Naive thymus-derived CD8-positive, alpha-beta T cell (primary cell): ENCODE measurements at regions of chr16 and their contacts with region 1.

Region 1: DNA sequence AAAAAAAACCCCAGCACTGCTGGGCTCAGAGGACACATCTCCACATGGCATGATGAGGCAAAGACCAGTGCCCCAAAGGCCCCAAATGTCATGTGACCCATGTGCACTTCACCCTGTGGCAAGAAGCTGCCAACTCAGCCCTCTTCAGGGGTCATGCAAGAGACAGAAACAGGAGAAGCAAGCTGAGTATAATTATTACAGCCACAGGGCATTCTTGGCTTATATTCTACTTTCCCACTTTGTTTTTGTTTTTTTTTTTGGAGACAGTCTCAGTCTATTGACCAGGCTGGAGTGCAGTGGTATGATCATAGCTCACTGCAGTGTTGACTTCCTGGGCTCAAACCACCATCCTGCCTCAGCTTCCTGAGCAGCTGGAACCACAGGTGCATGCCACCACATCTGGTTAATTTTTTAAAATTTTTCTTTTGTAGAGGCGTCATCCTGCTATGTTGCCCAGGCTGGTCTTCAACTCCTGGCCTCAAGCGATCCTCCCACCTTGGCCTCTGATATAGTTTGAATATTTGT is 32.7 kb upstream of the LITAF start:
- DNase-seq: peak in 6 of 10 donors; percentile 11 to 57 (median 42)
- ATAC-seq: peak; percentile 35 to 41
- H3K4me3 Mint-ChIP-seq: peak overlapping the region; percentile 44 to 91 (median 71)
- H3K27ac Mint-ChIP-seq: peak overlapping the region; percentile 90 to 100 (median 98)
- H3K4me1 Mint-ChIP-seq: peaks cover 26 to 86% (median 76%) of the 10 kb centered on the region in 4 donors
- H3K27me3 Mint-ChIP-seq: no peaks in the 10 kb centered on the region

Region 2: DNA sequence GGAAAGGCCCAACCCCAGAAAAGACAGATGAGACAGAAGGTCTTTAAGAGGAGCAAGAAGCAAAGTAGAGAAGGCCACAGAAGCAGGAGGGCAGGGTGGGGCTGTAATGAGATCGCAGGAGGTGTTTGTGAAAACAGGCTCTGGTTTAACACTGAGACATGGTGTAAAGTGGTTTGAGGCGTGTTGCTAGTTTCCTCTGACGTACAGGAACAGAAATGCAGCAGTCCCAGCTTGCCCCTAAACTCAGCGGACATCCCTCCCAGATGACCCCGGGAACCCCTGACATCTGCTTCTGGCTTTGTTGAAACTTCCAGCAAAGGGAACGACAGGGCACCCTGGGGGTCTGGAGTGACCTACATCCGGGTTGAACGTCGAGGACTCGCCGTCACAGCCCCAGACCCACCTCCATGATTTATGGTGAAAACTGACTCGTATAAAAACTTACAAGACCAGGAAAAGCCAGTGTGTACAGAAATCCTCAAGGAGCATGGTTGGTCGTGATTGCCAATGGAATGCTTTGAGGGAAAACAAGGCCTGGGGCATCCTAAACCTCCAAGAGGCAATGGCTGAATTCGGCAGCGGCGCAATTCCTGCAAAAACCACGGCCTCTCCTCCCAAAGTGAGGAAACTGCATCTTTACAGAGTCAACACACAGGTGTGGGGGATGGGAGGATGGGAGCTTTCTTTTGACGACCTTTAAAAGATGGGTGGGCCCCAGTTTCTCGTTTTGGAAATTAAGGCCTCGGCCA is 58.5 kb before region 1 on chr16:
- POLR2A ChIA-PET with region 1: interaction called, 21 read pairs
- DNase-seq: peak; percentile 41 to 92 (median 85)
- ATAC-seq: peak; percentile 88 to 90
- H3K4me3 Mint-ChIP-seq: peak overlapping the region; percentile 78 to 94 (median 83)
- H3K27ac Mint-ChIP-seq: peak overlapping the region; percentile 95 to 100 (median 100)
- H3K4me1 Mint-ChIP-seq: peaks cover 41 to 90% (median 81%) of the 10 kb centered on the region in 4 donors
- H3K27me3 Mint-ChIP-seq: no peaks in the 10 kb centered on the region

Region 3: DNA sequence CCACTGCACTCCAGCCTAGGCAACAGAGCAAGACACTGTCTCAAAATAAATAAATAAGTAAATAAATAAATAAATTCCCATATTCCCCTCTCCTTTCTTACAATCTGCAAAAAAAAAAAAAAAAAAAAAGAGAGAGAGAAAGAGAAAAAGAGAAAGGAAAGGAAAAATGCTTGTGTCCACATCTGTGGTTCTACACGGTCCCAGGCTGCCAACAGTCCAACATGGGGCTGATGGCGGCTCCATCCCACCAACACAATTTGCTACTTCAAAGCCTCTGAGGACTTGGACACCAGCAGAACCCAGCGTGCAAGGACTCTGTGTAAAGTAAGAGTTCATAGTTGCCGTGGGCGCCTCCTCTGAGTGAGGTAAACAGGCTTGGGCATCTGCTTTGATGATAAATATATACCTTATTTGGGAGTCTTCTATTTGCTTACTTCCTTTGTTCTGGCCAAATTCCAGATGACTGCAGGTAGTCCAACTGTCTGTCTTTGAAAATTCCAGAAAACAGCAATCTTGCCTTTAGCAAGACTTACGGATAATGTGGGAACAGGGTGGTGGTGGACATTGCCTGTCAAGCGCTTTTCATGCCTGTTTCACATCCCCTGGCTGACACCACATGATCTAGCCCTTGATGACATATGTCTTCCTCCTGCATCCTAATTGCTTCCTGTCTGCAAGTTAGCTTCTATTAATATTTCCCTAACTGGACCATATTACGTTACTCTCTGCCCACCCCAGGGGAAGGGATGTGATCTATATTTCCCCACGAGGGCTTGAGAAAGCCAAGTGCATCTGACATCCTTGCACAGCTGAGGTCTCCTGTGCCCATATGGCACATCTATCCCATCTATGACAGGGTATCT is 42.7 kb before region 1 on chr16:
- POLR2A ChIA-PET with region 1: interaction called, 23 read pairs
- DNase-seq: no peak
- ATAC-seq: no peak
- H3K4me3 Mint-ChIP-seq: peak overlapping the region in 9 of 10 donors; percentile 62 to 85 (median 70)
- H3K27ac Mint-ChIP-seq: peak overlapping the region in 9 of 10 donors; percentile 54 to 95 (median 90)
- H3K4me1 Mint-ChIP-seq: peaks cover 32 to 91% (median 87%) of the 10 kb centered on the region in 4 donors
- H3K27me3 Mint-ChIP-seq: no peaks in the 10 kb centered on the region

Region 4: GRCh38 chr16:11597239-11598101 is 21.9 kb before region 1 on chr16:
- POLR2A ChIA-PET with region 1: interaction called, 22 read pairs
- DNase-seq: peak in 1 of 10 donors; percentile 34
- ATAC-seq: peak; percentile 73 to 81
- H3K4me3 Mint-ChIP-seq: peak overlapping the region in 5 of 10 donors; percentile 10 to 52 (median 33)
- H3K27ac Mint-ChIP-seq: peak overlapping the region; percentile 63 to 92 (median 84)
- H3K4me1 Mint-ChIP-seq: peaks cover 13 to 31% (median 26%) of the 10 kb centered on the region in 4 donors
- H3K27me3 Mint-ChIP-seq: no peaks in the 10 kb centered on the region

Region 5: DNA sequence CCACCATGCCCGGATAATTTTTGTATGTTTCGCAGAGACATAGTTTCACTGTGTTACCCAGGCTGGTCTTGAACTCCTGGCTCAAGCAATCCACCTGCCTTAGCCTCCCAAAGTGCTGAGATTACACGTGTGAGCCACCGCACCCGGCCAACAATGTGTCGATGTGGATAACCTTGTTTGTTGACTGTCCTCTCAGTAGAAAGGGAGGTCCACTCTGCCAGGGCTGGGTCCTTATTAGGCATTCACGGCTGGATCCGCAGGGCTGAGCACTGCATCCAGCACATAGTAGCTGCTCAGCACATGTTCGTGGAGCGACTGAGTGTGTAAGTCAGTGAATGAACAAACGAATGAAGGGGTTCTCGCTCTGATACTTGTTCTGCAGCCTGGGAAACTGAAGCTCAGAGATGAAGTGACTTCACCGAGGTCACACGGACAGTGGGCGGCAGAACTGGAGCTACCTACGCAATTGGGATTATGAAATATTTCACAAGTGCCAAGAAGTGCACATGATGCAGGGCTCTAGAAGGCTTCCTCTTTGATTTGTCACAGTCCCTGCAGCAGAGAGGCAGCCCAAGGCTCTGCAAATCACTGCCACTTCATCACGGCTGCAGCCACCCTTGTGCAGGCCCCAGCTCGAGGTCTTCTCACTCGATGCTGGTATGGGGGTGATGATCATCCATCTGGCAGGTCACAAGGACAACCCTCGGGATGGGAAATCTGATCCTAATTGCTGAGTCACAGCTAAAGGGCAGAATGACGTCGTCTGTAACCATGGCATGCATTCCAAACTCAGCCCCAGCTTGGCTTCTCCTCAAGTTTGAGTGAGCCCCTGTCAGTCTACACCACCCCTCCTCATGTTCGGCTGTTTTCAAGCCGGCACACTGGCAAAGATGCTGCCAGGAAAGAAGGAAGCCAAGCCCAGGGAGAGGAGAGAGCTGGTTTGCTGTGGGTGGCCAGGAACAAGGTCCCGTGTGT is 20.8 kb after region 1 on chr16:
- POLR2A ChIA-PET with region 1: interaction called, 13 read pairs
- DNase-seq: peak in 1 of 10 donors; percentile 16
- ATAC-seq: no peak
- H3K4me3 Mint-ChIP-seq: peak overlapping the region in 1 of 10 donors; percentile 3
- H3K27ac Mint-ChIP-seq: peak overlapping the region in 8 of 10 donors; percentile 11 to 91 (median 50)
- H3K4me1 Mint-ChIP-seq: peaks cover 18 to 30% (median 25%) of the 10 kb centered on the region in 4 donors
- H3K27me3 Mint-ChIP-seq: peaks cover 0 to 1% (median 0%) of the 10 kb centered on the region in 5 donors

Region 6: GRCh38 chr16:11667824-11668622 is 48.6 kb after region 1 on chr16 and contains the start of gene SNN:
- POLR2A ChIA-PET with region 1: interaction called, 21 read pairs
- DNase-seq: peak; percentile 73 to 90 (median 82)
- ATAC-seq: peak; percentile 76 to 80
- H3K4me3 Mint-ChIP-seq: peak within 1 kb of the TSS; percentile 81 to 95 (median 90)
- H3K27ac Mint-ChIP-seq: peak within 1 kb of the TSS; percentile 51 to 98 (median 97)
- H3K4me1 Mint-ChIP-seq: peaks cover 44 to 83% (median 78%) of the 10 kb centered on the region in 4 donors
- H3K27me3 Mint-ChIP-seq: no peaks in the 10 kb centered on the region
- polyA plus RNA-seq, gene SNN: 16.0 to 26.9 (median 19.0) TPM